OCI-LY7 (cell line): ENCODE measurements at regions of chr18 and their contacts with region 1.

Region 1: DNA sequence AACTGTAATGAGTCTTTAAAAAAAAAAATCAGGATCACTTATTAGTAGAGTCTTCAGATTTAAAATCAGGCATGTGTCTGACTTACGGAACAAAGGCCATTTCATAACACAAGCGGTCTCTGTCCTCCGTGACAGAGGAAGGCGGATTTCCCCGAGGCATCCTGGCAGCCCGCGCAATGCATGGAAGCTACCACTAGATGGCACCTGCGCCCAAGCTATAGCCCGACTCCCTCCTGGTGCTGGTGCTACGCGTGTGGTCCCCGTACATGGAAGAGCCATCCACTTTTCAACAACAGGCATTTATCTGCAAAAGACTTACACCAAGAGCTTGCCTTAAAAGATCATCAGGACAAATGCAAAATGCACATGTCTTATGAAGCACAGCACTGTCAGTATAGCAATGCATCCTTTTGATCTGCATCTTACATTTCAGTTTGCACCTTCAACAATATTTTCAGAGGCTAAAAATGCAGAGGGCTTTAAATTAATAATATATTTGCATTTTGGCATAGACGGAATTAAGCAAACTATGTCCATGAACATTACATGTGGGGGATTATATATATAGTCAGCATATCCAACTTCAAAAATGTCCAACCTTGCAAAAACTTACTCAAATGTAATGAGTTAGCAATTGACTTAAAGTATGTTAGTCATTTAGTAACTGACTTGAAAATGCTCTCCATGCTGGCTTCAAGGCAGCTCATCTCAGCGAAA is 96.0 kb downstream of the ZNF516 start:
- DNase-seq: peak; percentile 46
- H3K4me3 ChIP-seq: no peak overlapping the region
- H3K27ac ChIP-seq: no peak overlapping the region
- H3K4me1 ChIP-seq: no peaks in the 10 kb centered on the region
- CTCF ChIP-seq: peak; percentile 82

Region 2: GRCh38 chr18:76620321-76621170 is 221.5 kb after region 1 on chr18:
- CTCF ChIA-PET with region 1: no interaction called
- POLR2A ChIA-PET with region 1: no interaction called
- intact Hi-C with region 1: loop called (anchors 5 kb)
- DNase-seq: peak; percentile 24
- H3K4me3 ChIP-seq: no peak overlapping the region
- H3K27ac ChIP-seq: no peak overlapping the region
- H3K4me1 ChIP-seq: no peaks in the 10 kb centered on the region
- CTCF ChIP-seq: peak; percentile 43

Region 3: DNA sequence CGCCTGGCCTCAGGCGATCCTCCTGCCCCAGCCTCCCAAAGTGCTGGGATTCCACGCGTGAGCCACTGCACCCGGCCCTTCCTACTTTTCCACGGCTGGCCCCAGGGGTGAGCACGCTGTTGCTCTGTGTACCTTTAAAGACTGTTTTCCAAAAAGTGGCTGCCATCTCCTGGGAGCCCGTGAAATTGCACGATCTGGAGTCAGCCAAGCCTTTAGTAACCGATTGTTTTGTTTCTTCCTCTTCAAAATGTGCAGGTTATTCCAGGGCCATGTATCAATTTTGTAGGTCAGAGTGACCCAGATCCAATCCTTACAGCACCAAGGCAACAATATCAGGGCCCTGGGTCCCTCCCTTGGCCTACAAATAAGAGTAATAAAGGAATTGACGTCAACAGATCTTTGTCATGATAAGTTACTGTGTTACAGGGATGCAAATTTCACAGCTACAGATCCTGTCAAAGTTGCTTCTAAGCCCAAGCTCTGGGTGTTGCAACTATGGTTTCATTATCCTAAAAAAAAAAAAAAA is 287.7 kb after region 1 on chr18:
- CTCF ChIA-PET with region 1: no interaction called
- POLR2A ChIA-PET with region 1: no interaction called
- intact Hi-C with region 1: loop called (anchors 5 kb)
- DNase-seq: peak; percentile 4
- H3K4me3 ChIP-seq: no peak overlapping the region
- H3K27ac ChIP-seq: no peak overlapping the region
- H3K4me1 ChIP-seq: no peaks in the 10 kb centered on the region
- CTCF ChIP-seq: peak; percentile 53

Region 4: DNA sequence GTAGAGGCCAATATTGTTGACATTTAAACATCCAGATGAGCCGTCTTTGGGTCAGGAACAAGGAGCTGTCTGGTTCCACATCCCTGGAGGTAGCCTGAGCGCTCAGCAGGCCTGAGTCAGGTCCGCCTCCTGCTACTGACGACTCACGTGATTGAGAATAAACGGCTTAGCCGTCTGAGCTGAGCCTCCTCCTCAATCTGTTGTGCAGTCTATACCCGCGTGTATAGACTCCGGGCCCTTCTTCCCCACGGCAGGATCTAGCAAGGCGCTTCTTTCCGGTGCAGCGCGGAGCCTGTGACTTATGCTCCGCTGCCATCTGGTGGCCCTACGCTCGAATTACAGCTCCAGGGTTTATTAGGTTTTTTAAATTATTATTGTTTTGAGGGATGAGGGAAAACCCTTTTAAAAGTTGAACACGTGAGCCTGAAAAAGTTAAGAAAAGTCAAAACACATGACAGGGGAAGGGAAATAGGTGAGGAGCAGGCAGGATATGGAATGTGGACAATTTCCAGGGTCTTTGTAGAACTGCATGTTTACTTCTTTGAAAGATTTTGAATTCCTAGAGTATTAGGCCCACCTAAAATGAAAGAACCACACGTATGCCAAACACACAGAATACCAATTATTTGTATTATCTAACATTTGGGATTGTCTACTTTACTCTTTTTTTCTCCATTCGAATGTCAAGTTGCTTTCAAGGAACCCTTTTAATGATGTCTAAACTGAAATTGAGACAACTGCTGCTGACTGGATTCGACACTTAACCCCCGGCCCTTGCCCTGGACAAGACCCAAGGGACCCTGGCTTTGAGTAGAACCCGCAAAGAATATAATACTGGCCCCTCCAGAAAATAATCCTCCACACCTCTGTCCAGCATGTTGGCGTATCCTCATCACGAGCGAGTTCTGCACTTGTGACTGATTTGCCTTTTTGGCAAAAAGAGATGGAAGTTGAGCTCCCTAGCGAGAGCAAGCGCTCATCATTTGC is 310.9 kb after region 1 on chr18:
- CTCF ChIA-PET with region 1: no interaction called
- POLR2A ChIA-PET with region 1: no interaction called
- intact Hi-C with region 1: loop called (anchors 1 kb)
- DNase-seq: peak; percentile 56
- H3K4me3 ChIP-seq: no peak overlapping the region
- H3K27ac ChIP-seq: no peak overlapping the region
- H3K4me1 ChIP-seq: no peaks in the 10 kb centered on the region
- CTCF ChIP-seq: peak; percentile 79